ENCODE measurements at regions of chr15 and their contacts with region 1.

Region 1: DNA sequence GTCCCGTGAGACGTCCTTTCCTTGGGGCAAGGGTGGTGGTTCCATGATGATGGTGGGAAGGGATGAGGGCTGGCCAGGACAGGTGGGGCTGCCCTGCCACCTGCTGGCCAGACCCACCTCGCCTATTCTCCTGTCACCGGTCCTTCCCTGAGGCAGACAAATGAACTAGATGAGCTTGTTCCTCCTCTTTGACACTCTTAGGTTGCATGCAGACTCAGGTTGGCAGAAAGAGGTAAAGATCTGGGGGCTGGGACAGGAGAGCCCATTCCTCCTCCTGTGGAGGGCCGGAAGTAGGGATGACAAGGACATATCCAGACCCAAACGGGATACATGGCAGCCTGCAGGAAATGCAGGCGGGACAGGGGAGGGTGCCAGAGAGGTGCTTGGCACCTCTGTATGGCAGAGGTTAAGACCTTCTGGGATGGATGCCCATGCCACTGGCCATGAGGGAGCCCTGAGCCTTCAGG is 38.6 kb downstream of the ACSBG1 start:
- DNase-seq: peak; percentile 85
- CTCF ChIP-seq: peak; percentile 93

Region 2: DNA sequence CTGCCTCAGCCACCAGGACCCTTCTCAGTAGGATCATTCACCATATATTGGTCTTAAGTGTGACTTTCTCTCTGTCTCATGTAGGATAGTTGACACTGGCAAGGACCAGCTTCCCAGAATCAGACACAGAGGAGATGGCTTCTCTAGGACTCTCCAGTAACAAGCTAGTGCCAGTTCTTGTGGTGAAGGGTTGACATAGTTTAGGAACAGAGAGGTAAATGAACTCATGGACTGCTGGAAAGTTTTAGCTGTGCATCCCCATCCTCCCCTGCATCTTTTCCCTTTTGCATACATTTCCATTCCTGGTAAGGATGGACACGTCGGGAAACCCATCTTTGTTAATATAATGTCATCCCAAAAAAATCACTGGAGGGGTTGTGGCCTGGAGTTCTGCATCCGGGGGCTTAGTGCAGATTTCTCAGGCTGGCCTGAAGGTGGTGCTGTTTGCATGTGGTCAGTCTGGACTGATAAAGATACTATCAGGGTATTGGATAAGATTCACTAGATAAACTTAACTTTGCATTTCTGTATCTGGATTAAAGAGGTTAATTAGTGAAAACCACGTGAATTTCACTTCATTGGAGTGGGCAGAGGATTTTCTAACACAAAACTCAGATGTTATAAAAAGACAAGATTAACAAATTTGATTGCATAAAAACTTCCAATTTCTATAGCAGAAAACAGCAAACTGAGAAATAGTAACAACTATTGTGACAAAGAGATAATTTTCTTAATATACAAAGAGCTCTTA is 229.1 kb before region 1 on chr15:
- CTCF ChIA-PET with region 1: interaction called, 15 read pairs
- POLR2A ChIA-PET with region 1: no interaction called
- DNase-seq: peak; percentile 67
- CTCF ChIP-seq: peak; percentile 85

Region 3: GRCh38 chr15:77981281-77982126 is 214.3 kb before region 1 on chr15:
- CTCF ChIA-PET with region 1: no interaction called
- POLR2A ChIA-PET with region 1: no interaction called
- DNase-seq: no peak
- CTCF ChIP-seq: no peak

Region 4: DNA sequence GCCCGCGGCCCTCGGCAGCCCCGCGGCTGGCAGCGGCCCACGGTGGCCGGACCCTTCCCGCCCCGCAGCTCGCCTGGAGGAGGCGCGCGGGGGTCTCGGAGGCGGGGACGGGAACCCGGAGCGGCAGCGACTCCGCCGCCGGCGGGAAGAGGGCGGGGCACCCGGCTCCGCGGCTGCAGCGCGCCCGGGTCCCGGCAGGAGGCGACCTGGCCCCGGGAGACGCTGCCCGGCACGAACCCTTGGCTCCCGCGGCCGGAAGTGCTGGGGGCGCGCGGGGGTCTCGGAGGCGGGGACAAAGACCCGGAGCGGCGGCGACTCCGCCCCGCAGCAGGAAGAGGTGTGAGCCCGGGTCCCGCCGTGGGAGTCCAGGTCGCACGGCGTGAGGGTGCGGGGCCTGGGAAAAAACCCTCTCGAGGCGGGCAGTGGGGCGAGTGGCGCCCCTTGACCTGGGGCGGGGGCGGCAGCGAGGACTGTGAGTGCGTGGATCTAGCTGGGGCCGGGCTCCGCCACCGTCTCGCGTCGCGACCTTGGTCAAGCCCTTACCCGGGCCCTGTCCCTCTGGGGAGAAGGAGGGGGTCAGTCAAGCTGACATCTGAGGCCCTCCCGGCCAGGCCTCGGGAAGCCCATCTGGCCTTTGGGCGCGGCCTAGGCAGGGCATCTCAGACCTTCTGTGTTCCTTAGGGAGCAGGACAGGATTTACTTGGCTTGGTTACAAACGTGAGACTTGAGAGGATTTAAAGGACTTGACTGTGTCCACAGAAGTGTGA is 64.3 kb before region 1 on chr15 and contains the start of gene CIB2:
- CTCF ChIA-PET with region 1: interaction called, 193 read pairs
- POLR2A ChIA-PET with region 1: no interaction called
- DNase-seq: peak; percentile 94
- CTCF ChIP-seq: peak; percentile 84

Region 5: GRCh38 chr15:78149068-78149804 is 46.5 kb before region 1 on chr15 and contains the start of gene IDH3A:
- CTCF ChIA-PET with region 1: interaction called, 24 read pairs
- POLR2A ChIA-PET with region 1: no interaction called
- DNase-seq: peak; percentile 99
- CTCF ChIP-seq: no peak

Region 6: DNA sequence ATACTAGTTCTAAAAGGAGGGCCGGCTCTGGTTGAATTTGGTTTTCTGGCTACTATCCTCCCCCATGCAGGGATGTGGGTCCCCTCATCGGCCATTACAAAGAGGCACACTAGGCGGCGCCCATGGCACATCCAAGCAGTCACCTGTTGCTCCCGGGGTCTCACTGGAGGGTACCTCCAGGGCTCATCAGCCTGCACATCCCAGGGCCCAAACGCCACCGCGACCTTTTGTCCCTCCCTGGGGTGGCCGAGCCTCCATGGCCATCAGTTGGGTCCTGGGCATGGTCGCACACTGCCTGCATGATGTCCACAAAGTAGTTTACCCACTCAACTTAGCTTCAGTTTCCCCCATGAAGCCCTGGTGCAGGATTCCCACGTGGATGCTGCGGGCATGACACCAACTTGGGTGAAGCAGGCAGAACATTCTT is 18.3 kb before region 1 on chr15:
- CTCF ChIA-PET with region 1: interaction called, 82 read pairs
- POLR2A ChIA-PET with region 1: no interaction called
- DNase-seq: peak; percentile 71
- CTCF ChIP-seq: peak; percentile 63

Region 7: DNA sequence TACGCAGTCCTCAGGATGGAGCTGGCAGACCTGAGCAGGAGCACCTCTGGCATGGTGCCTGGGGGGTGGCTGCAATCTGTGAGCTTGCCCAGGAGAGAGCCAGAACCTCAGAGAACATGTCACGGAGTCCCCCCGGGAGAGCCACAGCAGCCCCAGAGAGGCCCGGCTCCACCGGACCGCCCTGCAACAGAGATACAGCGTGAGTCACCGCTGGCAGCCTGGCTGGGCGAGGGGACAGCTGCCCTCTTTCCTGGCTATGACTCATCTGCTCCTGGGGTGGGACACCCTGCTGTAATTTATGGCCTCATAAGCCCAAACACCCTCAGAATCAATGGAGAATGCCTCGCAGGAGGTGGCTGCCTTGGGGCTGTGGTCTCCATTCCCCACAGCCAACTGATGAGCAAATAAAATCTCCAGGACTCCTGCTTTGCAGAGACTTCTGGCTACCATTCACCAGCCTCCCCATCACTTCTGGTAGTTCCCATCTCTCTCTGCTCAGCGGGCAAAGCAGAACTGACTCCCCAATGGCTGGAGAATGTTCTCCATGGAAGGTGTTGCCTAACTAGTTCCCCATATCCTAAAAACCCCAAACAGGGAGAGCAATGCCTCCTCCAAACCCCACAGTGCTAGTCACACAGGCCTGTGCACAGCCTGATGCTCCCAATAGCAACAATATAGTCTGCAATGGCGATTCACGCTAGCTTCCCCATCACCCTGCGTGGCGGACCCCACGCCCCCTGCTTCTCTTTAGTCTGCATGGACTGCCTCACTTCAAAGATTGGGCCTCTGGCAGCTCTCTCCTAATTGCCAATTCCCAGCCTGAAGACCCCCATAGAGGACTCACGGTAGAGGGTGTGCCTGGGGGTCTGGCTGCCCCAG is 17.0 kb after region 1 on chr15:
- CTCF ChIA-PET with region 1: interaction called, 12 read pairs
- POLR2A ChIA-PET with region 1: no interaction called
- DNase-seq: no peak
- CTCF ChIP-seq: no peak

Measured in GM10248 (cell line).